Left colon (tissue), 2 donors: ENCODE measurements at regions of chr16 and their contacts with region 1.

Region 1: DNA sequence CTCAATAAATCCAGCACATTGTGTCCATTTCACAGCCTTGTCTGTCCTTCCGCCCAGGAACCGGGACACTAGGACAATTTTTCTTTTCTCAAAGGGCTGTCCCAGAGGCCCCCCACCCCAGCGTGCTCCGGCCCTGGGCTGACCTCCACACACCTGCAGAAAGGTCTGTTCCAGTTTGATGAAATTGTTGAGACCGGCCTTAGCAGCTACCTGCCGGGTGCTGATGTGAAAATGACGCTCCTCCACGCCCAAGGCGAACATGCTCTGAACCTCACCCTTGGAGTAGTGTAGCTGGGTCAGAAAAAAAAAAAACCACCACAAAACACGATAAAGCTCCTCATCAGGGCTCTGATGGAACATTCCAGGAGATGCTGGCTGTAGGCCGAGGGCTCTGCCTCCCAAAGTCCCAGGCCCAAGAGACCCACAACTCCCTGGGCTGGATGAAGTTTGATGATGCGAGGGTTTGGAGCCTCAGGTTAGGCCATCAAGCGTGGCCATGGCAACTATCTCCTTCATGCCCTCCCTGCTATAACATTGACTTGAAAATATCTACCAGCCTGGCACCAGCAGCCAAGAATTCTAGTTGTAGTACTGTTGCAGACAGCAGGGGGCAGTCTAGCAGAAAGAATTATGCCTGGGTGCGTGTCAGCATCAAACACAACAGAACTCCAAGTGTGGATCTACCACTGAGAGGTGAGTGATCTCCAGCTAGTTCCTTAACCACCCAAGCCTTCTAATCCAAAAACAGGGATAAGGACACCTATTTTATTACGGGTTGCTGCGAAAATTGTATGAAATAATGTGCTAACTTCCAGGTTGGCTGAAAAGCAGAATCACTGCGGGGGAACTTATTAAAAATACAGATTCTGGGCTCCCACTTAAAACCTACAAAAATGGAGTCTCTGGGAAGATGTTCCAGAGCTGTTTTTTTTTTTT is 62.1 kb downstream of the RMI2 start:
- DNase-seq: peak in 1 of 2 donors; percentile 80
- ATAC-seq: peak; percentile 86

Region 2: DNA sequence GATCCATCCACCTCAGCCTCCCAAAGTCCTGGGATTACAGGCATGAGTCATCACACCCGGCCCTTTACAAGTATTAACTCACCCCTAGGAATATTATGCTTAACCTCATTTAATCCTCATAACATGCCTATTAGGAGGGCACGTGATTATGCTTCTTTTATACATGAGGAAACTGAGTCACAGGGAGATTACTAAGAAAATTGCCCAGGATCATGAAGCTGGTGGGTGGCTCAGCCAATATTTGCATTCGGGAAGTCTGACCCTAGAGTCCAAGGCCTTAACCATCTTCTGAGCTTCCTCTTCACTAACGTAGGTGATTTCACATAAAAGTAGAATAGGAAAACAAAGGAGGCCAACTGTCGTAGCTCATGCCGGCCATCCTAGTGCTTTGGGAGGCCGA is 242.0 kb after region 1 on chr16:
- intact Hi-C with region 1: loop called (anchors 5 to 10 kb)
- DNase-seq: no peak
- ATAC-seq: no peak

Region 3: GRCh38 chr16:11806721-11807120 is 399.4 kb after region 1 on chr16:
- intact Hi-C with region 1: loop called in 1 of 2 experiments (anchors 5 kb)
- DNase-seq: no peak
- ATAC-seq: no peak